Naive thymus-derived CD4-positive, alpha-beta T cell (primary cell): ENCODE measurements at regions of chr9 and their contacts with region 1.

Region 1: DNA sequence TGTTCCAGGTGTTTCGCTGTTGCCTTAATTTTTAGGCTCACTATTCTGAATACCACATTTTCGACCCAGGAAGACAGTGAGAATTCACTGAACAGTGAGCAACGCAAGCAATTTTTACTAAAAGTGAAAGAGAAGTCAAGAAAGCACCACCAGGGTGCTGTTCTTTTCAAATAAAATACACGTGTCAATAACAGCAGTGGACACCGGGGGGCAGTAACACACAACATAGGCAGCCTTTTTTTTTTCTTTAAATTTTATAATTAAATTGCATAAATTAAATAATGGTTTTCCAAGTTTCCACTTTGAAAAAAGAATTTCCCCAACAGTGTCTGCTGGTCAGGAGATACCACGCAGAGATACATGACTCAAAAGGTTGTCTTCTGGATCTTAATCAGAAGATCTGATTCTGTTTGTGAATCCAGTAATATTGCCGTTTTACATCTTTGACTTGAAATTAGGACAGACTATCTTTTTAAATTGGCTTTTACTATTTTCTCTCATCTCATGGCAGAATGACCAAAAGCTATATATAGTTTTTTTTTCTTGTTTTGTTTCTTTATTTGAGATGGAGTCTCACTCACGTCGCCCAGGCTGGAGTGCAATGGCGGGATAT is 47.1 kb upstream of the SH3GL2 start:
- DNase-seq: no peak
- ATAC-seq: no peak
- H3K4me3 ChIP-seq: no peak overlapping the region
- H3K4me3 Mint-ChIP-seq: no peak overlapping the region
- H3K27ac ChIP-seq: no peak overlapping the region
- H3K27ac Mint-ChIP-seq: no peak overlapping the region
- H3K4me1 ChIP-seq: no peaks in the 10 kb centered on the region
- H3K4me1 Mint-ChIP-seq: peaks cover 0 to 3% (median 0%) of the 10 kb centered on the region in 7 donors
- H3K27me3 ChIP-seq: no peaks in the 10 kb centered on the region
- H3K27me3 Mint-ChIP-seq: no peaks in the 10 kb centered on the region

Region 2: DNA sequence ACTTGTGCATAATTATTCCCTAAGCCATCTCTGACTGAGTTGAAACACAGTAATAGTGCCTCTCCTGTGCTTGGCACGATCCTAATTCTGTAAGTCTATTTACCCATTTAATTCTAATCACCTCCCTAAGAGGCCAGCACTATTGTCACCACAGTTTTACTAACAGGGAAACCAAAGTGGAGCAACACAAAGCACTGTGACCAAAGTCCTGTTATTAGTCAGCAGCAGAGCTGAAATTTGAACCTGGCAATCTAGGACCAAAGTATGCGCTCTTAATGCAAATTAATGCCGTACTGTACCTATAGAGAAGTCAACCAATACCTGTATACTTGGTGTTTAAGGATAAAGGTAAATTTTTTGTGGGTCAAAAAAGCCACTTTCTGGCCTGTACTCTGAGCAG is 474.0 kb before region 1 on chr9:
- CTCF ChIA-PET with region 1: no interaction called
- POLR2A ChIA-PET with region 1: no interaction called
- intact Hi-C with region 1: no loop called
- DNase-seq: no peak
- ATAC-seq: no peak
- H3K4me3 ChIP-seq: no peak overlapping the region
- H3K4me3 Mint-ChIP-seq: no peak overlapping the region
- H3K27ac ChIP-seq: no peak overlapping the region
- H3K27ac Mint-ChIP-seq: no peak overlapping the region
- H3K4me1 ChIP-seq: no peaks in the 10 kb centered on the region
- H3K4me1 Mint-ChIP-seq: no peaks in the 10 kb centered on the region
- H3K27me3 ChIP-seq: no peaks in the 10 kb centered on the region
- H3K27me3 Mint-ChIP-seq: no peaks in the 10 kb centered on the region

Region 3: DNA sequence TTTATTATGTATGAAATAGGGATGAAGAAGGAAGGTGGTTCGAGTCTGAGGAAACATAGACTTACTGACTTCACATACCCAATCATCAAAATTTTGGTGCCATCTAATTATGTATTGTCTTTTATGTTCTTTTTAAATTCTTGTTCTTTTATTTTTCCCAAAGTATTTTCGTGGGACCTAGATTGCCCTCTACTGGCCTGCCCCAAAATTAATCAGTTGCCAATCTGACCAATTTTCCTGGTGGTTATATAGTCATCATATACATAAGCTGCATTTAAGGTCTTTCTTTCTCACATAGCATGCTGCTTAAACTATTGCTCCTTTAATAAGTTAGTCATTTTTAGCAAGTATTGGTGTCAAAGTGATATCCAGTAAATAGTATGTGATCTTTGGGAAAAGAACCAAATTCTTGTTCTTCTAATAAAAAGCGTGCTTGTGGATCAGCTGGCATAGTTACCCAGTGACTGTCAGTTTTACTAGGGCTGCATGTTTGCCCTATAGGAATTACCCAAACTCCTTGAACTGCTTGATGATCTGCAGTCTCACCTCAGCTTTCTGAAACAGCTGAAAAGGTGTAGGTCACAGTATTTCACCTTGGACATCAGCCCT is 270.6 kb after region 1 on chr9:
- CTCF ChIA-PET with region 1: no interaction called
- POLR2A ChIA-PET with region 1: no interaction called
- intact Hi-C with region 1: loop called in 1 of 2 experiments (anchors 5 kb)
- DNase-seq: no peak
- ATAC-seq: no peak
- H3K4me3 ChIP-seq: no peak overlapping the region
- H3K4me3 Mint-ChIP-seq: no peak overlapping the region
- H3K27ac ChIP-seq: no peak overlapping the region
- H3K27ac Mint-ChIP-seq: no peak overlapping the region
- H3K4me1 ChIP-seq: no peaks in the 10 kb centered on the region
- H3K4me1 Mint-ChIP-seq: no peaks in the 10 kb centered on the region
- H3K27me3 ChIP-seq: no peaks in the 10 kb centered on the region
- H3K27me3 Mint-ChIP-seq: peaks cover 0 to 5% (median 0%) of the 10 kb centered on the region in 5 donors

Region 4: GRCh38 chr9:17928228-17928627 is 396.5 kb after region 1 on chr9:
- CTCF ChIA-PET with region 1: no interaction called
- POLR2A ChIA-PET with region 1: no interaction called
- intact Hi-C with region 1: no loop called
- DNase-seq: no peak
- ATAC-seq: no peak
- H3K4me3 ChIP-seq: no peak overlapping the region
- H3K4me3 Mint-ChIP-seq: no peak overlapping the region
- H3K27ac ChIP-seq: no peak overlapping the region
- H3K27ac Mint-ChIP-seq: no peak overlapping the region
- H3K4me1 ChIP-seq: no peaks in the 10 kb centered on the region
- H3K4me1 Mint-ChIP-seq: no peaks in the 10 kb centered on the region
- H3K27me3 ChIP-seq: no peaks in the 10 kb centered on the region
- H3K27me3 Mint-ChIP-seq: no peaks in the 10 kb centered on the region

Region 5: GRCh38 chr9:18208154-18209059 is 676.7 kb after region 1 on chr9:
- CTCF ChIA-PET with region 1: no interaction called
- POLR2A ChIA-PET with region 1: no interaction called
- intact Hi-C with region 1: loop called in 1 of 2 experiments (anchors 2 kb)
- DNase-seq: no peak
- ATAC-seq: no peak
- H3K4me3 ChIP-seq: no peak overlapping the region
- H3K4me3 Mint-ChIP-seq: no peak overlapping the region
- H3K27ac ChIP-seq: no peak overlapping the region
- H3K27ac Mint-ChIP-seq: no peak overlapping the region
- H3K4me1 ChIP-seq: no peaks in the 10 kb centered on the region
- H3K4me1 Mint-ChIP-seq: no peaks in the 10 kb centered on the region
- H3K27me3 ChIP-seq: no peaks in the 10 kb centered on the region
- H3K27me3 Mint-ChIP-seq: peaks cover 0 to 12% (median 0%) of the 10 kb centered on the region in 5 donors

Region 6: GRCh38 chr9:18442629-18443491 is 911.1 kb after region 1 on chr9:
- CTCF ChIA-PET with region 1: no interaction called
- POLR2A ChIA-PET with region 1: no interaction called
- intact Hi-C with region 1: loop called in 1 of 2 experiments (anchors 10 kb)
- DNase-seq: peak in 5 of 9 donors; percentile 12 to 47 (median 25)
- ATAC-seq: peak; percentile 64
- H3K4me3 ChIP-seq: no peak overlapping the region
- H3K4me3 Mint-ChIP-seq: no peak overlapping the region
- H3K27ac ChIP-seq: no peak overlapping the region
- H3K27ac Mint-ChIP-seq: no peak overlapping the region
- H3K4me1 ChIP-seq: no peaks in the 10 kb centered on the region
- H3K4me1 Mint-ChIP-seq: peaks cover 0 to 5% (median 0%) of the 10 kb centered on the region in 7 donors
- H3K27me3 ChIP-seq: no peaks in the 10 kb centered on the region
- H3K27me3 Mint-ChIP-seq: peaks cover 12 to 28% (median 16%) of the 10 kb centered on the region in 5 donors